ENCODE measurements at regions of chr7 and their contacts with region 1.

Region 1: DNA sequence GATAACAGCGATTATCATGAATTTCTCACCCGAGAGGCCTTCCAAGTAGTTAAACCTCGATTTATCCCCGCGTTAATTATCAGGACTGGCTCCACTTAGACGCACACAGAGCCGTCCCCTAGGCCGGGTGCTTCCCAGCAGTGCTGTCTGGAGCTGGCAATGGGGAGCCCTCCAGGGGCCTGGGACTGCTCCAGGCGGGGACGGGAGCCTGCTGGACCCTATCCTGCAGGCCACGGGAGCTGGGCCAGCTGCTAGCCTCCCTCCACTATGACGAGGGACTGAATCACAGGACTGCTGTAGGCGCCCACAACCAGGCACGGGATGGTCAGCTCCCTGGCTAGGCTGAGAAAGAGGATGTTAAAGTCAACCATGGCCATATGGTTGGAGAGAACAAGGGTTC is 229.1 kb downstream of the ELFN1 start:
- DNase-seq: no peak
- ATAC-seq: no peak
- H3K4me3 ChIP-seq: no peak overlapping the region
- H3K4me3 Mint-ChIP-seq: no peak overlapping the region
- H3K27ac ChIP-seq: no peak overlapping the region
- H3K27ac Mint-ChIP-seq: peak overlapping the region; percentile 55
- H3K4me1 ChIP-seq: peaks cover 9% of the 10 kb centered on the region
- H3K4me1 Mint-ChIP-seq: peaks cover 9% of the 10 kb centered on the region
- H3K27me3 ChIP-seq: no peaks in the 10 kb centered on the region
- H3K27me3 Mint-ChIP-seq: no peaks in the 10 kb centered on the region
- CTCF ChIP-seq: no peak

Region 2: DNA sequence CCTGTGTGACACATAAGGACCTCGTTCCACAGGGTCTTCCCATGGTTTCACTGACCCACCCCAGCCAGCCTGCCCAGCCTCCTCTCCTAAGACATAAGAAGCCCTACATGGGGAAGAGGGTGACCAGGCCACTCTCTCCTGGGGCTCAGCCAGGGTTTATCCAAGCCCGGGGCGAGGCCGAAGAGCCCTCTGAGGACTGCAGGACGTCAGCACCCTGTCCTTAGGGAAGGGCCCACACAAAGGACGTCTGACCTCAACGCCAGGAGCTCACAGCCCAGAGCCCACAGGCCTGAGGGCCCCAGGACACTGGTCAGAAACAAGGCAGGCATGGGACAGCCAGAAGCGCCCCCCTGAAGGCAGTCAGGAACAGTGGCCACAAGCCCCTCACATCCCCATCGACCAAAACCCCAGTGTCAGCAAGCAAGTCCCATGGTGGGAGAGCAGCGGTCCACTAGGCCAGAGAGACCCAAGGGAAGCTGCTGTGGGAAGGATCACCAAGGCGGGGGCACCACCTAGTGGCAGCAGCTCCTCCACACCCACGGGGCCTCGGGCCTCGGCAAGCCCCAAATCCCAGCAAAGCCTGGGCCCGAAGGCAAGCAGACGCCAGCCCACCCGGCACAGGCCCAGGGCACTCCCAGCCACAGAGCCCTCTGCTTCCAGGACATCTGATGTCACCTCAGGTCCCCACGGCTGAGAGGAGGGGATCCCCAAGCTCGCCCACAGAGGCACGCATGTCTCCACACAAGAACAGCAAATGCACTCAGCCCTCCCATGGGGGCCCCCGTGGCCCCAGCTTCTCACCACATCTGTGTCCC is 310.2 kb after region 1 on chr7:
- CTCF ChIA-PET with region 1: no interaction called
- POLR2A ChIA-PET with region 1: no interaction called
- intact Hi-C with region 1: loop called in 1 of 2 experiments (anchors 10 kb)
- DNase-seq: peak; percentile 11 to 61 (median 32)
- ATAC-seq: peak; percentile 61
- H3K4me3 ChIP-seq: no peak overlapping the region
- H3K4me3 Mint-ChIP-seq: no peak overlapping the region
- H3K27ac ChIP-seq: no peak overlapping the region
- H3K27ac Mint-ChIP-seq: no peak overlapping the region
- H3K4me1 ChIP-seq: peaks cover 2% of the 10 kb centered on the region
- H3K4me1 Mint-ChIP-seq: peaks cover under 1% of the 10 kb centered on the region
- H3K27me3 ChIP-seq: no peaks in the 10 kb centered on the region
- H3K27me3 Mint-ChIP-seq: no peaks in the 10 kb centered on the region
- CTCF ChIP-seq: peak; percentile 33